AG04450 (cell line): ENCODE measurements at regions of chr16 and their contacts with region 1.

Region 1: GRCh38 chr16:64751906-64752305 is 370.0 kb downstream of the CDH11 start:
- DNase-seq: peak; percentile 68
- H3K4me3 ChIP-seq: no peak overlapping the region
- H3K27ac ChIP-seq: peak overlapping the region; percentile 59
- H3K27me3 ChIP-seq: no peaks in the 10 kb centered on the region
- CTCF ChIP-seq: no peak

Region 2: DNA sequence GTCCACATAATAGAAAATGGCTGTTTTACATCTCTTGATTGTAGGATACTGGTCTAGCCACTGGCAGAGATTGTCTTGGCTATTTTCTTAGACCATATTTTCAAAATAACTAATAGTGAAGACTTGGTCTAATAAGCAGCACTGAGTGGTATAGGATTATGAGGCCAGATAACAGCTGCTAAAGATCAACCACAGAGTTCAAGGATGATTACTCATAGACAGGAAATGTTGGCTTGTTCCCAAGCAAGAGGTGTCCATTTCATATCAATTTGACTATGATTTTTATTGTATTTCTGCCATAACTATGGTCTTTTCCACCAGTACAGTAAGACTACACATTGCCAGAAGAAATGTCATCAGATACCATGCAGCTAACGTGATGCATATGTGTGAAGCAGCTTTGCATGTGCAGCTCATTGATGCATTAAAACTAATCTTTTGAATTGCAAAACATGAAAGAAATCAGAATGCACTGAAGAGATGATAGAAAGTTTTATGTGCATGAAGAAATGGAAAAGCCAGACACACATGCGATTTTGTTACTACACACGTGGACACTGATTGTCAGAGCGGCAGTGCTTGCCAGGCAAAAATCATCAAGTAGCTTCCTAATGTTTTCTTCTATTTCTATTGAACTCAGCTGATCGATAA is 323.3 kb before region 1 on chr16:
- CTCF ChIA-PET with region 1: no interaction called
- POLR2A ChIA-PET with region 1: no interaction called
- DNase-seq: peak; percentile 41
- H3K4me3 ChIP-seq: no peak overlapping the region
- H3K27ac ChIP-seq: no peak overlapping the region
- H3K27me3 ChIP-seq: no peaks in the 10 kb centered on the region
- CTCF ChIP-seq: no peak

Region 3: DNA sequence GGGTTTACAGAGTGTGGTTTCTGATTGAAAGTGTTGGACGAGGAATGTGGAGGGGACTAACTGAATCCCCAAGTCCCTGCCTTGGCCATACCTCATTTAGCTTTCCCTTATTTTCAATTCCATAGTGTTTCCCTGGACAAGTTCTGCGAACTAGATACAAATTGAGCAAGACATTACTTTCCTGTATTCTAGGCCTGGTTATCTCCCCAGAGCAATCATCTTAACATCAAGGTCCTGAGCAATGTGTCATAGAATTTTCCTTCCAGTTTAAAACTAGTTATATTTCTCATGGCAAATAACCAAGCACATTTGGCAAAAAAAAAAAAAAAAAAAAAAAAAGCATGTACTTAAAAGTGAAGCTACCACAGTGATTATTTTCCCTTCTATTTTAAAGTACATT is 39.9 kb after region 1 on chr16:
- CTCF ChIA-PET with region 1: no interaction called
- POLR2A ChIA-PET with region 1: no interaction called
- DNase-seq: no peak
- H3K4me3 ChIP-seq: no peak overlapping the region
- H3K27ac ChIP-seq: no peak overlapping the region
- H3K27me3 ChIP-seq: no peaks in the 10 kb centered on the region
- CTCF ChIP-seq: no peak

Region 4: DNA sequence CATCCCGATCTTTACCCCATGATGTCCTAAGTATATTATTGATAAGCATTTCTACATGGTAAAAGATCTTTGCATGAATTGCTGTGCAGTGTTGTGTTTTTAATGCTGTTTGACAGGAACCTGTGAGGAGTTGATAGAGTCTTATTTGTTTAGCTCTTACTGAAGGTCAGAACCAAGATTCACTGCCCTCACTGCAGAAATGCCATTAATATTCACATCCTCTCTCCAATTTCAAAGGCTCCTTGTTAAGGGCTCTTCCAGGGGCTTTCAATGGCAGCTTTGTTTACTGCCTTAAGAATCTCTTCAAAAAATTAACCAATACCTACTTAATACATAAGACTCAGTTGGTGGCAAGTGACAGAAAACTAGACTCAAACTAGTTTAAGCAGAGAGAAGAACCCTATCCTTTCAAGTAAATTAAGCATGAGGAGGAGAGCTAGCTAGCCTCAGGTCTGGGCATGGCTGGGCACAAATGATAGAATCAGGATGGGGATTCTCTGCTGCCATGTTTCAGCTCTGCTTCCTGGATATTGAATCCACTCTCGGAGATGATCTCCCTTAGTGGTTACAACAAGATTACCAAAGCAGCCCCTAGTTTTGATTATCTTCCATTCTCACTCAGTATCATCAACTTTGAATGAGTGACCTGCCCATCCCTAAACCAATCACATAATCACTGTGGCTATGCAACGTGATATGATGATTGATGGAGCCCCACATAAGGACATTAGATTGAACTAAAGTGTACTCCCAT is 58.1 kb after region 1 on chr16:
- CTCF ChIA-PET with region 1: no interaction called
- POLR2A ChIA-PET with region 1: no interaction called
- DNase-seq: no peak
- H3K4me3 ChIP-seq: no peak overlapping the region
- H3K27ac ChIP-seq: no peak overlapping the region
- H3K27me3 ChIP-seq: no peaks in the 10 kb centered on the region
- CTCF ChIP-seq: no peak; the same call in 1 of the 2 replicates

Region 5: GRCh38 chr16:64864232-64864809 is 112.4 kb after region 1 on chr16:
- CTCF ChIA-PET with region 1: no interaction called
- POLR2A ChIA-PET with region 1: interaction called, 12 read pairs
- DNase-seq: peak; percentile 93
- H3K4me3 ChIP-seq: no peak overlapping the region
- H3K27ac ChIP-seq: peak overlapping the region; percentile 87
- H3K27me3 ChIP-seq: no peaks in the 10 kb centered on the region
- CTCF ChIP-seq: no peak